MCF 10A (cell line): ENCODE measurements at regions of chr12 and their contacts with region 1.

Region 1: DNA sequence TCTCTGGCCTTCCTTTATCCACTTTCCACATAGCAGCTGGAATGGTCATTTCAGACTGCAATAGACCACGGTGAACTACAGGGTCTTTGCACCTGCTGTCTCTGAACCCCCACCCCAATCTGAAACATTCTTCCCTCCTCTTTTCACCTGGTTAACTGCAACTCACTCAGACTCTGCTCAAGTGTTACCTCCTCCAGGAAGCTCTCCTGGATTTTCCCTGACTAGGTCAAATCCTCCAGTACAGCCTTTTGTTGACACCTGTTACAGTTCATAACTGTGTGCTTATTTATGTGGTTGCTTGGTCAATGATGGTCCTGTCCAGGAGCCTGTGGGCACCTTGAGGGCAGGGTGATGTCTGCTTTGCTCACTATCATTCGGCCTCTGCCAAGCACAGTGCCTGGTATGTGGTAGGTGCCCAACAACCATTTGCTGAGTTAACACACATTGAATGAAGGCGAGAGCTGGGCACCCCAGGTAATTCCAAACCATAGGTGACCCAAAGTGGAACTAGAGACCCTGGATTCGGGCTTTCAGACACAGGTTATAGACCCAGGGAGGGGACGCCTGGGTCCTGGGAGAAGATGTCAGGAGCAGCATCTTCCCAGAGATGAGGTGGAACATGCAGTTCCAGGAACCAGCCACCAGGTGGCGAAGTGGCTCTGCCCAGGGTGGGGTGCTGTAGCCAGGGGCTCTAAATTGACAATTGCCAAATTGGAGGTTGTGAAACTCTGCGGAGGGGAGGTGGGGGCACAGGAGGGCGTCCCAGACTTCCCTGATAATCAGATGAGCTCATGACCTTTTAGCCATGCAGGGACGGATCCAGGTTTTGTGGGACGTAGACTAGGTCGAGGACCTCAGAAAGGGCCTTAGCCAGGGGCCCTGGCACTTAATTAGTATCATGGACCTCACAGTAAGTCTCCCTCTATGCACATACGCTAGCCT is 28.1 kb downstream of the TRPV4 start:
- DNase-seq: peak; percentile 55
- H3K4me3 Mint-ChIP-seq: no peak overlapping the region
- H3K27ac Mint-ChIP-seq: no peak overlapping the region
- H3K4me1 Mint-ChIP-seq: no peaks in the 10 kb centered on the region
- H3K27me3 Mint-ChIP-seq: no peaks in the 10 kb centered on the region
- CTCF ChIP-seq: peak; percentile 96

Region 2: DNA sequence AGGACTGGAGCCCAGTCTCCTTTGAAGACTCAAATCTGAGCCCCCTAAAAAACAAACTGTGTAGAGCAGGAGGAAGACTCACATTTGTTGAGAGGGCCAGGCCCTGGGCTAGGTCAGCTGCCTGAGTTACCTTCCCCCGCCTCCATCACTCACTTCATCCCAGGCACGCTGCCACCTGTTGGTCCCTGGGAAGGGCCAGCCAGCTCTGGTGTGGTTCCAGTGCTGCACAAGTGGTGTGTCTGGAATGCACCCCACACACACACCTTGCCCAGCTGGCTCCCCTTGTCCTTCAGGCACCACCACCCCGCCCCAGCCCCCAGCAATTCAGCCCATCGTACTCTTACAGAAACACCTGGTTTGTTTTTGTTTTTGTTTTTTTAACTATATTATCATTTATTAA is 222.4 kb before region 1 on chr12:
- CTCF ChIA-PET with region 1: no interaction called
- POLR2A ChIA-PET with region 1: no interaction called
- intact Hi-C with region 1: no loop called
- DNase-seq: peak; percentile 35
- H3K4me3 Mint-ChIP-seq: peak overlapping the region; percentile 59
- H3K27ac Mint-ChIP-seq: peak overlapping the region; percentile 92
- H3K4me1 Mint-ChIP-seq: peaks cover 14% of the 10 kb centered on the region
- H3K27me3 Mint-ChIP-seq: no peaks in the 10 kb centered on the region
- CTCF ChIP-seq: no peak

Region 3: GRCh38 chr12:109818905-109819500 is 13.9 kb after region 1 on chr12:
- CTCF ChIA-PET with region 1: interaction called, 39 read pairs
- POLR2A ChIA-PET with region 1: interaction called, 3 read pairs
- intact Hi-C with region 1: no loop called
- DNase-seq: peak; percentile 93
- H3K4me3 Mint-ChIP-seq: no peak overlapping the region
- H3K27ac Mint-ChIP-seq: peak overlapping the region; percentile 76
- H3K4me1 Mint-ChIP-seq: peaks cover 45% of the 10 kb centered on the region
- H3K27me3 Mint-ChIP-seq: no peaks in the 10 kb centered on the region
- CTCF ChIP-seq: no peak

Region 4: GRCh38 chr12:109844983-109845823 is 40.1 kb after region 1 on chr12:
- CTCF ChIA-PET with region 1: interaction called, 300 read pairs
- POLR2A ChIA-PET with region 1: interaction called, 8 read pairs
- intact Hi-C with region 1: loop called (anchors 1 kb)
- DNase-seq: peak; percentile 82
- H3K4me3 Mint-ChIP-seq: no peak overlapping the region
- H3K27ac Mint-ChIP-seq: no peak overlapping the region
- H3K4me1 Mint-ChIP-seq: no peaks in the 10 kb centered on the region
- H3K27me3 Mint-ChIP-seq: no peaks in the 10 kb centered on the region
- CTCF ChIP-seq: peak; percentile 97

Region 5: GRCh38 chr12:109880016-109880931 is 75.2 kb after region 1 on chr12 and contains the start of gene GLTP:
- CTCF ChIA-PET with region 1: interaction called, 5 read pairs
- POLR2A ChIA-PET with region 1: interaction called, 3 read pairs
- intact Hi-C with region 1: loop called (anchors 1 kb)
- DNase-seq: peak; percentile 88
- H3K4me3 Mint-ChIP-seq: peak within 1 kb of the TSS; percentile 96
- H3K27ac Mint-ChIP-seq: peak within 1 kb of the TSS; percentile 82
- H3K4me1 Mint-ChIP-seq: peaks cover 41% of the 10 kb centered on the region
- H3K27me3 Mint-ChIP-seq: no peaks in the 10 kb centered on the region
- CTCF ChIP-seq: peak; percentile 56
- total RNA-seq, gene GLTP: 37.2 and 53.3 TPM in 2 replicates